ENCODE measurements at regions of chr9 and their contacts with region 1.

Region 1: GRCh38 chr9:137240861-137241489 is at the start of gene TUBB4B:
- DNase-seq: peak; percentile 99
- ATAC-seq: peak; percentile 80
- H3K4me3 Mint-ChIP-seq: peak within 1 kb of the TSS; percentile 86
- H3K27ac Mint-ChIP-seq: peak within 1 kb of the TSS; percentile 94
- H3K4me1 Mint-ChIP-seq: peaks cover 40% of the 10 kb centered on the region
- H3K27me3 Mint-ChIP-seq: no peaks in the 10 kb centered on the region
- total RNA-seq, gene TUBB4B: 417 to 432 TPM

Region 2: DNA sequence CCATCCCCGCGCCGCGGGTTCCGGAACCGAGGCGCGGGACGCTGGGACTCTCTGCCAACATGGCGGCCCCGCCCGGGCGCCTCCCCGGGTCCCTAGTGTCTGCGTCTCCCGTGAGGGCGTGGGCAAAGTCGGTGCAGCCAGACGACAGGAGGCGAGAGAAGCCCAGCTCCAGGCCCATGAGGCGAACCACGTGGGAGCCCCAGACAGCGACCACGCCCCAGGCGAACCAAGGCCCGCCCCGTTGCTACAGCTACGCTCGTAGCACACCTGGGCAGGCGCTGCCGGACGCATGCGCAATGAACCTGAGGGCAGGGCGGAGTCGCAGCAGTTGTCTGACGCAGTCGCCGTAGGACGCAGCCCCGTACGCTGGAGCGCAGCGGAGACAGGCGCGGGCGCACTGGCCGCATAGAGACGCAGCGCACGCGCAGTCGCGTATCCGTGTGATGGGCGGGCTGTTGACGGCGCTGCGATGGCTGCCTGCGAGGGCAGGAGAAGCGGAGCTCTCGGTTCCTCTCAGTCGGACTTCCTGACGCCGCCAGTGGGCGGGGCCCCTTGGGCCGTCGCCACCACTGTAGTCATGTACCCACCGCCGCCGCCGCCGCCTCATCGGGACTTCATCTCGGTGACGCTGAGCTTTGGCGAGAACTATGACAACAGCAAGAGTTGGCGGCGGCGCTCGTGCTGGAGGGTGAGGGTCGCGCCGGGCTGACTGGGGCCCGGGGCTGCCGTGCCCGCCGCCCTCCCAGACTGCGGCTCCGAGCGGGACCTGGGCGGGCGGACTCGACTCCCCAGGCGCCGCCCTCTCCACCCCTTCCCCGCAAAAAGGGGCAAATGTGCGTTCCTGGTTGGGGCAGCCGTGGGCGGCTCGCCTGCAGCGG is 154.2 kb before region 1 on chr9 and contains the start of gene MAN1B1:
- CTCF ChIA-PET with region 1: interaction called, 13 read pairs
- POLR2A ChIA-PET with region 1: interaction called, 9 read pairs
- DNase-seq: peak; percentile 100
- ATAC-seq: peak; percentile 89
- H3K4me3 Mint-ChIP-seq: peak within 1 kb of the TSS; percentile 90
- H3K27ac Mint-ChIP-seq: peak within 1 kb of the TSS; percentile 94
- H3K4me1 Mint-ChIP-seq: peaks cover 39% of the 10 kb centered on the region
- H3K27me3 Mint-ChIP-seq: no peaks in the 10 kb centered on the region
- total RNA-seq, gene MAN1B1: 42.2 to 49.2 TPM

Region 3: GRCh38 chr9:137114610-137115391 is 126.2 kb before region 1 on chr9 and contains the start of gene DPP7:
- CTCF ChIA-PET with region 1: interaction called, 12 read pairs
- POLR2A ChIA-PET with region 1: interaction called, 11 read pairs
- DNase-seq: peak; percentile 85
- ATAC-seq: peak; percentile 96
- H3K4me3 Mint-ChIP-seq: peak within 1 kb of the TSS; percentile 74
- H3K27ac Mint-ChIP-seq: peak within 1 kb of the TSS; percentile 73
- H3K4me1 Mint-ChIP-seq: peaks cover 11% of the 10 kb centered on the region
- H3K27me3 Mint-ChIP-seq: no peaks in the 10 kb centered on the region
- total RNA-seq, gene DPP7: 248 TPM

Region 4: DNA sequence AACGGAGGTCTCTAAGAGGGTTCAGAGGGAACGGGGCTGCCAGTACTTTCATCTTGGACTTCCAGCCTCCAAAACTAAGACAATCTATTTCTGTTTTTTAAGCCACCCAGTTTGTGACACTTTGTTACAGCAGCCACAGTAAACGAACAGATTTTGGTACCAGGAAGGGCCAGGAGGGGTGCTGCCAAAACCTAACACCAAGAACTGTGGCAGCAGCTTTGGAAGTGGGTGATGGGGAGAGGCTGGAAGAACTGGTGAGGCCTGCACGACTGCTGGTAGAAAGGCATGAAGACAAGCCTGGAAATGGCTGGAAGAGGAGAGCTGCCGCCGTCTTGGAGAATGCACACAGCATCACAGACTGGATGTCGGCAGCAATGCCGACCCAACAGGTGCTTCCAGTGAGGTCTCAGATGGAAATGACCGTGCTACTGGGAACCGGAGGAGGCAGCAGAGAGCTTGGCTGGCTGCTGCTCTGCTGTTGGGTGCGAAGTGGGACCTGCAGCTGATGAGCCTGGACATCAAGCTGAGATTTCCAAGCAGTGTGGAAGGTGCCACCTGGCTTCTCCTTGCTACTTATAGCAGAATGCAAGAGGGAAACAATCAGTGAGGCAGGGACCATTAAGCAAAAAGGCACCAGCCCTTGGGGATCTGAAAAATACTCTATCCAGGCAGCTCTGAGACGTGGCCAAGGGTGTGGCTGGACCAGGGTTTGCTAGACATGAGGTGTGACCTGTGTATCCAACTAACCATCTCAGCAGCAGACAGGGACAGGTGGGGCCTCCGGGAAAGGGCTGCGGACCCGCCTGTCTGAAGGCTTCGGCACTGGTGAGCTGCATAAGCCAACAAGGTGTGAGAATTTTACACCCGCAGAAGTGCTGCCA is 64.4 kb before region 1 on chr9:
- CTCF ChIA-PET with region 1: interaction called, 11 read pairs
- POLR2A ChIA-PET with region 1: no interaction called
- DNase-seq: peak; percentile 42
- ATAC-seq: peak; percentile 54
- H3K4me3 Mint-ChIP-seq: no peak overlapping the region
- H3K27ac Mint-ChIP-seq: no peak overlapping the region
- H3K4me1 Mint-ChIP-seq: no peaks in the 10 kb centered on the region
- H3K27me3 Mint-ChIP-seq: peaks cover 11% of the 10 kb centered on the region

Region 5: DNA sequence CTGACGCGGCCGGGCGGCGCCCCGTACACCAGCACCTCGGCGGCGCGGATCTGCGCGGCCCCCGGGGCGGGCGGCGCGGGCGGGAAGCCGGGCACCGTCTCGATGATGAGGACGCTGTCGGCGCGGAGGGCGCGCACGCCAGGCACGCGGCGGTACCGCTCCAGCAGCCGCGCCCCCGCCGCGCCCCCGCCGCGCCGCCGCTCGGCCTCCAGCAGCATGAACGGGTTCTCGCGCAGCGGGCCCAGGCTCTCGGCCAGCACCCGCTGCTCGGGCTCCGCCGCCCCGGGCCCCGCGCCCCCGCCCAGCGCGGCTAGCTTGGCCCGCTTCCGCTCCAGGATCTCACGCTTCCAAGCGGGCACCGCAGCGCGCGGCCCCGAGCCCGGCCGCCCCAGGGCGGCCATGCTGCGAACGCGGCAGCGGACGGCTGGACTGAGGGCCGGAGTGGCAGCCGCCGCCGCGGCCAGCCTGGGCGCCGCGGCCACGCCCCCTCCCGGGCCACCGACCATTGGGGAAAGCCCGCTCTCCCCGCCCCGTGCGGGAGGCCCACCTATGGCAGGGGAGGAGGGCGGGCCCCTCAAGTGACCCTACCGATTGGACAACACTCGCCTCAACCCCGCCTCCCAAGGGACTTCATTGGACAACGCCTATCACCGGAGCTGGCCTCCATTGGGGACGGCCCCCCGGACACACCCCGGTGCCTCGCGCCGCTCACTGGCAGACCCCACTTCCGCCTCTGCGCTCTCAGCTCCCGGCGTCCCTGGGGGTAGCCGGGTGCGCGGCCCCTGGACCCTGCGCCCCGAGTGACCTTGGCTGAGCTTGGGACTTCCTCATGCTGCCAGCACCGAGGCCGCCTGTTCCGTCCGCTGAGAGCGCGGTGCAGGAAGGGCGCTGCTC is 40.4 kb before region 1 on chr9 and contains the start of gene TPRN:
- CTCF ChIA-PET with region 1: interaction called, 13 read pairs
- POLR2A ChIA-PET with region 1: interaction called, 5 read pairs
- DNase-seq: peak; percentile 99
- ATAC-seq: peak; percentile 97
- H3K4me3 Mint-ChIP-seq: peak within 1 kb of the TSS; percentile 86
- H3K27ac Mint-ChIP-seq: peak within 1 kb of the TSS; percentile 86
- H3K4me1 Mint-ChIP-seq: peaks cover 39% of the 10 kb centered on the region
- H3K27me3 Mint-ChIP-seq: no peaks in the 10 kb centered on the region
- total RNA-seq, gene TPRN: 10.9 to 12.0 TPM

Region 6: DNA sequence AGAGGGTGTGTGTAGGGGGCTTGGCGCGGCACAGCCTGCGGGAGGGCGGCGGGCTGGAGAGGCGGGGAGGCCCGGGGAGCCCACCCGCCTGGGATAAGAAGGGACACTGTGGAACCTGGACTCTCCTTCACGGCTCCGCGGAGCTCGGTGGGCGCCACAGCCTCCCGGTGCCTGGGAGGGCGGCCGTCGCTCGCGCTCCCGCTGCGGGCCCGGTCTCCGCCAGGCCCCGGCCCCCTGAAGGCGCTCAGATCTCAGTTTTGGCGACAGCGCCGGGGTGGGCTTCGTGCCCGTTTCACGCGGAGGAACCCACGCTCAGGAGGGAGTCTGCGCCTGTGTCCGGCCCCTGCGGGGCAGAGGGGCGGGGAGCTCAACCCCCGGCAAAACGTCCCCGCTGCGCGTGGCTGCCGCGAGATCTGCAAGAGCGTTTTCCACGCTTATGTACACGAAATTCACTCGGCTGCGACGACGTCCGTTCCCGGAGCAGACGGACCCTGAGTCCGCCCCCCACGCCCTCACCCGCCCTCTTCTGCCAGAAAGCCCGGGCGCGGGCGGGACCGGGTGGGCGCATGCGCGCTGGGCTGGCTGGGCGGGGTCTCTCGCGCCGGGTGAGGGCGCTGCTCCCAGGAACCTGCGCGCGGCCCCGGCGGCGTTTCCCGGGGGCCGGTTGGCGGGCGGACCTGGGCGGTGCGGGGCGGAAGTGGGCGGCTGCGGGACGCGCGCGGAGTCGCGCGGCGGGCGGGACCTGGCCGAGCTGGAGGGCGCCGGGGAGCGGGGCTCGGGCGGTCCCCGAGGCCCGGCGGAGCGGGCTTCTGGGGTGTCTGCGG is 13.9 kb after region 1 on chr9 and contains the start of gene NELFB:
- CTCF ChIA-PET with region 1: interaction called, 32 read pairs
- POLR2A ChIA-PET with region 1: interaction called, 87 read pairs
- DNase-seq: peak; percentile 95
- ATAC-seq: peak; percentile 91
- H3K4me3 Mint-ChIP-seq: peak within 1 kb of the TSS; percentile 91
- H3K27ac Mint-ChIP-seq: peak within 1 kb of the TSS; percentile 87
- H3K4me1 Mint-ChIP-seq: peaks cover 20% of the 10 kb centered on the region
- H3K27me3 Mint-ChIP-seq: no peaks in the 10 kb centered on the region
- total RNA-seq, gene NELFB: 68.6 to 68.8 TPM

Region 7: GRCh38 chr9:137348769-137349470 is 107.9 kb after region 1 on chr9:
- CTCF ChIA-PET with region 1: no interaction called
- POLR2A ChIA-PET with region 1: no interaction called
- DNase-seq: no peak
- ATAC-seq: no peak
- H3K4me3 Mint-ChIP-seq: no peak overlapping the region
- H3K27ac Mint-ChIP-seq: no peak overlapping the region
- H3K4me1 Mint-ChIP-seq: no peaks in the 10 kb centered on the region
- H3K27me3 Mint-ChIP-seq: no peaks in the 10 kb centered on the region

Region 8: DNA sequence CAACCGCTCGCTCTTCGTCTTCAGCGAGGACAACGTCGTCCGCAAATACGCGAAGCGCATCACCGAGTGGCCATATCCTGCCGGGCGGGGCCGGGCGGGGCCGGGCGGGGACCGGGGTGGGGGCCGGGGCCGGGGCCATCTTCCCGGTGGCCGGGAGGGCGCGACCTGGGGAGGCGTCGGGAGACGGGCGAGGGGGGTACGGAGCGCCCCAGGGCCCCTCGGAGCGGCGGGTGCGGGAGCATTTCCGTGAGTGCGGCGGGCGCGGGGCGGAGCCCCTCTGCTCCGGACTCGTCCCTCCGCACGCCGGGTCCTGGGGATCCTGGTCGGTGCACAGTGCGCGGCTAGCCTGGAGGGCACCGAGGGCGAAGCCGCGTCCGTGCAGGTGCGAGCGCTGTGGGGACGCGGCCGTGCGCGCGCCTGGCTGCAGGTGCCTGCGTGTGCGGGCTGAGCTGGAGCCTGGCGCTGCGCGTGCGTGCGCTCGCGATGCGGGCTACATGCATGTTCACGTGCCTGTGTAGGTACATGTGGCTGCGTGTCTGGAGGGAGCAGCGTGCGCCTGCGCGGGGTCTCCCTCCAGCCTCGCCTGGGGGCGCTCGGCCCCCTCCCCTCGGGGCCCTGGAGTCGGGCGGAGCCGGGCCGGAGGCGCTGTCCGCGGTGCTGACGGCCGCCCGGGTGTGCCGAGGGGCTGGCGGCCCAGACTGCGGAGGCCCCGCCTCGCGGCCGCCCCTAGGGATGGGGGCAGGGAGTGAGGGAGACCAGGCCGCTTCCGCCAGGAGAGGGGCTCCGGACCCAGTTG is 637.4 kb after region 1 on chr9:
- CTCF ChIA-PET with region 1: no interaction called
- POLR2A ChIA-PET with region 1: no interaction called
- DNase-seq: peak; percentile 46
- ATAC-seq: peak; percentile 76
- H3K4me3 Mint-ChIP-seq: no peak overlapping the region
- H3K27ac Mint-ChIP-seq: no peak overlapping the region
- H3K4me1 Mint-ChIP-seq: peaks cover 2% of the 10 kb centered on the region
- H3K27me3 Mint-ChIP-seq: peaks cover 11% of the 10 kb centered on the region

Measured in activated CD8-positive, alpha-beta T cell treated with anti-CD3 and anti-CD28 coated beads, Interleukin-2, amount 10 ng/mL, durations not matched to agents 7 days and 5 days (primary cell).